Caco-2 (cell line): ENCODE measurements at regions of chr7 and their contacts with region 1.

Region 1: DNA sequence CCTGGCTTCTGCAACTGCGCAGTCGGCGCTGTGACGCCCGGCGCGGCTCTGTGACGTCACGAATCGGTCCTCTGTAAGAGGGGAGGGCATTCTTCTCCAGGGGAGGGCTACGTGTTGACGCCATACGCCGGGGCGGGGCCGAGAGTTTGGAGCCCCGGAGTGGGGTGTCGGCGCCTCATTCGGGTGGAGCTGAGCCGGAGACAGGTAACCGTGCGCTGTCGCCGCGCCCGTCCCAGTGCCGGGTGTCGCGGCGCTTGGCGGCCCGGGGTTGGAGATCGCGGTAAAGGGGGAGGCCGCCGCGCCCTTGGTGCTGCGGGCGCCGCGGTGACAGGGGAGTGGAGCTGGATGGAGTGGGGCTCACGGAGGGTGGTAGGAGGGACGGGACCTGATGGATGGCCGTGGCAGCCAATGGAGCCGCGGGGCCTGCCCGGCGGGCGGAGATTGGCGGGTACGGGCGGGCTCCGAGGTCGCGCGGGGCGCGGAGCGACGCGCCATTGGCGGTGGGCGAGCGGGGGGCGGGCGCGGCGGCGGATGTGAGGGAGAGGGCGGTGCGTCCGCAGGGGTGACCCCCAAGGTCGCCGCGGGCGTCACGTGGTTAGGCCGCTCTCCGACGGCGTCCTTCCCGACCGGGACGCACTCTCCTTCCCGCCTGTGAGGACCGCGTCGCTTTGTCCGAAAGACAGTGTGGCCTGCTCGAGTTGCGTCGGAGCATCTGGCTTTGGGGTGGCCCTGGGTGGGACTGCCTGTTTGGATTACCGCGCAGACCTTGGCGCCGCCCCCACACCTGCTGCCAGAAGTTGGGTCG is at the start of gene OGDH:
- DNase-seq: peak; percentile 98 to 99
- H3K4me3 ChIP-seq: peak within 1 kb of the TSS; percentile 76
- H3K4me3 Mint-ChIP-seq: peak within 1 kb of the TSS; percentile 91
- H3K27ac Mint-ChIP-seq: peak within 1 kb of the TSS; percentile 97
- H3K4me1 ChIP-seq: peaks cover 16% of the 10 kb centered on the region
- H3K4me1 Mint-ChIP-seq: peaks cover 22% of the 10 kb centered on the region
- H3K27me3 ChIP-seq: no peaks in the 10 kb centered on the region
- H3K27me3 Mint-ChIP-seq: no peaks in the 10 kb centered on the region
- CTCF ChIP-seq: no peak
- total RNA-seq, gene OGDH: 62.1 and 64.5 TPM in 2 replicates

Region 2: GRCh38 chr7:44573464-44574286 is 33.0 kb before region 1 on chr7 and contains the start of gene DDX56:
- CTCF ChIA-PET with region 1: no interaction called
- POLR2A ChIA-PET with region 1: interaction called, 16 read pairs
- intact Hi-C with region 1: no loop called
- DNase-seq: peak; percentile 96 to 97
- H3K4me3 ChIP-seq: peak within 1 kb of the TSS; percentile 88
- H3K4me3 Mint-ChIP-seq: peak within 1 kb of the TSS; percentile 95
- H3K27ac Mint-ChIP-seq: peak within 1 kb of the TSS; percentile 92
- H3K4me1 ChIP-seq: 0 out of 2 replicates have a peak, but pooled peaks cover 8% of the 10 kb centered on the region
- H3K4me1 Mint-ChIP-seq: peaks cover 10% of the 10 kb centered on the region
- H3K27me3 ChIP-seq: no peaks in the 10 kb centered on the region
- H3K27me3 Mint-ChIP-seq: no peaks in the 10 kb centered on the region
- CTCF ChIP-seq: no peak
- total RNA-seq, gene DDX56: 135 and 154 TPM in 2 replicates

Region 3: GRCh38 chr7:44618743-44619142 is 12.1 kb after region 1 on chr7:
- CTCF ChIA-PET with region 1: no interaction called
- POLR2A ChIA-PET with region 1: interaction called, 14 read pairs
- intact Hi-C with region 1: loop called (anchors 1 kb)
- DNase-seq: peak; percentile 88 to 89
- H3K4me3 ChIP-seq: no peak overlapping the region
- H3K4me3 Mint-ChIP-seq: peak overlapping the region; percentile 67
- H3K27ac Mint-ChIP-seq: peak overlapping the region; percentile 92
- H3K4me1 ChIP-seq: peaks cover 68% of the 10 kb centered on the region
- H3K4me1 Mint-ChIP-seq: peaks cover 53% of the 10 kb centered on the region
- H3K27me3 ChIP-seq: no peaks in the 10 kb centered on the region
- H3K27me3 Mint-ChIP-seq: no peaks in the 10 kb centered on the region
- CTCF ChIP-seq: no peak

Region 4: GRCh38 chr7:44678471-44679179 is 72.0 kb after region 1 on chr7:
- CTCF ChIA-PET with region 1: no interaction called
- POLR2A ChIA-PET with region 1: no interaction called
- intact Hi-C with region 1: no loop called
- DNase-seq: peak in 1 of 2 experiments; percentile 5
- H3K4me3 ChIP-seq: no peak overlapping the region
- H3K4me3 Mint-ChIP-seq: no peak overlapping the region
- H3K27ac Mint-ChIP-seq: peak overlapping the region; percentile 55
- H3K4me1 ChIP-seq: no peaks in the 10 kb centered on the region
- H3K4me1 Mint-ChIP-seq: peaks cover 11% of the 10 kb centered on the region
- H3K27me3 ChIP-seq: no peaks in the 10 kb centered on the region
- H3K27me3 Mint-ChIP-seq: no peaks in the 10 kb centered on the region
- CTCF ChIP-seq: no peak

Region 5: GRCh38 chr7:44748045-44748947 is 141.6 kb after region 1 on chr7 and contains the start of gene ZMIZ2:
- CTCF ChIA-PET with region 1: no interaction called
- POLR2A ChIA-PET with region 1: interaction called, 4 read pairs
- intact Hi-C with region 1: loop called (anchors 1 kb)
- DNase-seq: peak; percentile 92 to 96
- H3K4me3 ChIP-seq: peak within 1 kb of the TSS; percentile 96
- H3K4me3 Mint-ChIP-seq: peak within 1 kb of the TSS; percentile 83
- H3K27ac Mint-ChIP-seq: peak within 1 kb of the TSS; percentile 72
- H3K4me1 ChIP-seq: peaks cover 24% of the 10 kb centered on the region
- H3K4me1 Mint-ChIP-seq: peaks cover 18% of the 10 kb centered on the region
- H3K27me3 ChIP-seq: no peaks in the 10 kb centered on the region
- H3K27me3 Mint-ChIP-seq: no peaks in the 10 kb centered on the region
- CTCF ChIP-seq: no peak
- total RNA-seq, gene ZMIZ2: 69.0 and 72.1 TPM in 2 replicates

Region 6: DNA sequence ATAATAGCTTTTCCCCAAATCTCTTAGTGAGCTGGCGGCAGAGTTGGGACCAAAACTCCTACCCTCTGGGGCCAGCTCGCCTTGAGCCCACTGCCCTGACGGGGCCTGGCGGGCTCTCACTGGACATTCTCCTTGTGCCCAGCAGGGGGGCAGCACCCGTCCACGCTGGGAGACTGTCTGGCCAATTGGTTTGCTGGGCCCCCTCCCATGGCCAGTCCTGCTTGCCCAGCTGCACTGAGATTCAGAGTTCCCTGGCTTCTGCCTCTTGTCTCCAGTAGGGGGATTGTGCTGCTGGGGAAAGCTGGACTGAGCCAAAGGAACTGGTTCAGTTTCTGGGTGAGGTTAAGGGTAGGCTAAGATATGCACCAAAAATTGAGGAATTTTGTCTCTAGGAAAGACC is 610.7 kb after region 1 on chr7:
- CTCF ChIA-PET with region 1: no interaction called
- POLR2A ChIA-PET with region 1: interaction called, 10 read pairs
- intact Hi-C with region 1: no loop called
- DNase-seq: peak; percentile 47 to 58
- H3K4me3 ChIP-seq: no peak overlapping the region
- H3K4me3 Mint-ChIP-seq: no peak overlapping the region
- H3K27ac Mint-ChIP-seq: no peak overlapping the region
- H3K4me1 ChIP-seq: no peaks in the 10 kb centered on the region
- H3K4me1 Mint-ChIP-seq: no peaks in the 10 kb centered on the region
- H3K27me3 ChIP-seq: peaks cover 1% of the 10 kb centered on the region; the same call in 1 of the 2 replicates
- H3K27me3 Mint-ChIP-seq: peaks cover 33% of the 10 kb centered on the region
- CTCF ChIP-seq: peak; percentile 58 to 83